AG04449 (cell line): ENCODE measurements at regions of chrX and their contacts with region 1.

Region 1: DNA sequence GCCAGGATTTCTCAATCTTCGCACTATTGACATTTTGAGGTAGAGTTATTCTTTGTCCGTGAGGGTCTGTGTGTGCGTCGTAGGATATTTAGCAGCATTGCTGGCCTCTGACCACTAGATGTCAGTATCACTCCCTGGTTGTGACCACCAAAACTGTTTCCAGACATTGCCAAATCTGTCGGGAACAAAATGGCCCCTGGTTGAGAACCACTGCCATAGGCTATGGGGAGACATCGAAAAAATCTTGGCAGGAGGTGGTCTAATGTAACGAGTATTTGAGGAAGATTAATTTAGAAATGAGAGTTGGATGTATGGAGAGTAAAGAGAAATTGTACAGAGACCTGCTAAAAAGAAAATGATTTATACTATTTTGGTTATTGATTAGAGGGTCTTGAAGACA is 108.4 kb downstream of the DOCK11 start:
- DNase-seq: no peak
- H3K4me3 ChIP-seq: no peak overlapping the region
- CTCF ChIP-seq: peak; percentile 60

Region 2: GRCh38 chrX:118459494-118459893 is 144.5 kb before region 1 on chrX:
- CTCF ChIA-PET with region 1: interaction called, 121 read pairs
- POLR2A ChIA-PET with region 1: no interaction called
- DNase-seq: no peak
- H3K4me3 ChIP-seq: no peak overlapping the region
- CTCF ChIP-seq: peak; percentile 38

Region 3: GRCh38 chrX:118474586-118474985 is 129.4 kb before region 1 on chrX:
- CTCF ChIA-PET with region 1: interaction called, 17 read pairs
- POLR2A ChIA-PET with region 1: no interaction called
- DNase-seq: no peak
- H3K4me3 ChIP-seq: no peak overlapping the region
- CTCF ChIP-seq: no peak

Region 4: GRCh38 chrX:118493016-118493415 is 111.0 kb before region 1 on chrX:
- CTCF ChIA-PET with region 1: interaction called, 12 read pairs
- POLR2A ChIA-PET with region 1: no interaction called
- DNase-seq: no peak
- H3K4me3 ChIP-seq: no peak overlapping the region
- CTCF ChIP-seq: no peak

Region 5: DNA sequence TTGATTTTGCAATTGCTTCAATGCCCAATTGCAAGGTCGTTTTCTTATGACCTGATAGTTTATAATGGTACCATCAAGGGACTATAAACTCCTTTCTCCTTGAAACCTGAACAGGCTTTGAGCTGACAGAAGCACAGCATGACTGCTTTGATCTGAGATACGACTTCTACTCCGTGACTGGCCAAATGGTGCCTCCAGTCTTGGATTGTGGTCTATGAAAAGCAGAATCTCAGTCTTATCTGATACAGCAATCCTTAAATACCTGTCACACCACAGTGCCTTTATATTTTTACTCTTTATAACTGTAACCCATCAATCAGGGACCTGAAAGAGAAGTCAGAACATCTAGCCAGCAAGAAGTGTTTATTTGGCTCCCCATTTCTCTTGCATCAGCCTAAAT is 15.3 kb before region 1 on chrX:
- CTCF ChIA-PET with region 1: interaction called, 20 read pairs
- POLR2A ChIA-PET with region 1: no interaction called
- DNase-seq: no peak
- H3K4me3 ChIP-seq: no peak overlapping the region
- CTCF ChIP-seq: no peak

Region 6: GRCh38 chrX:118807151-118808017 is 203.4 kb after region 1 on chrX:
- CTCF ChIA-PET with region 1: interaction called, 13 read pairs
- POLR2A ChIA-PET with region 1: no interaction called
- DNase-seq: no peak
- H3K4me3 ChIP-seq: no peak overlapping the region
- CTCF ChIP-seq: peak; percentile 44